ENCODE measurements at regions of chr6 and their contacts with region 1.

Region 1: DNA sequence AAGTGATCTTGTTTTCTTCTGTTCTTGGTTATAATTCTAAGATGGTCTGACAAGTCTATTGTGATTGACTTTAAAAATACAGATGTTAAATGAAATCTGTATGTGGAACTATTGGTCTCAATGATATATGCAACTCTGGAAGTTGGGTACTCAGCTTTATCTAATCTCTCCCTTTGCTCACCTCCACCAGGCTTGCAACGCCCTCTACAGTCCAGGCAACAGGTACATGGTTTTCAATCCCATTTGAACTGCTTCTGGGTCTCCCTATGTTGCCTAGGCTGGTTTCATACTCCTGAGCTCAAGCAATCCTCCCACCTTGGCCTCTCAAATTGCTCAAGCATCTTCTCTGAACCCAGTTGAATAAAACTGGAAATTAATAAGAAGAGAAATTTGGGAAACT is 25.6 kb upstream of the HLA-DQB1 start:
- DNase-seq: peak; percentile 81
- H3K4me3 Mint-ChIP-seq: no peak overlapping the region
- H3K27ac Mint-ChIP-seq: no peak overlapping the region
- H3K4me1 Mint-ChIP-seq: no peaks in the 10 kb centered on the region
- H3K27me3 Mint-ChIP-seq: peaks cover 75% of the 10 kb centered on the region
- CTCF ChIP-seq: peak; percentile 83

Region 2: GRCh38 chr6:32432050-32432450 is 260.0 kb before region 1 on chr6:
- CTCF ChIA-PET with region 1: interaction called, 3 read pairs
- intact Hi-C with region 1: loop called (anchors 2 kb)
- DNase-seq: no peak
- H3K4me3 Mint-ChIP-seq: no peak overlapping the region
- H3K27ac Mint-ChIP-seq: no peak overlapping the region
- H3K4me1 Mint-ChIP-seq: no peaks in the 10 kb centered on the region
- H3K27me3 Mint-ChIP-seq: peaks cover 74% of the 10 kb centered on the region
- CTCF ChIP-seq: peak; percentile 69

Region 3: DNA sequence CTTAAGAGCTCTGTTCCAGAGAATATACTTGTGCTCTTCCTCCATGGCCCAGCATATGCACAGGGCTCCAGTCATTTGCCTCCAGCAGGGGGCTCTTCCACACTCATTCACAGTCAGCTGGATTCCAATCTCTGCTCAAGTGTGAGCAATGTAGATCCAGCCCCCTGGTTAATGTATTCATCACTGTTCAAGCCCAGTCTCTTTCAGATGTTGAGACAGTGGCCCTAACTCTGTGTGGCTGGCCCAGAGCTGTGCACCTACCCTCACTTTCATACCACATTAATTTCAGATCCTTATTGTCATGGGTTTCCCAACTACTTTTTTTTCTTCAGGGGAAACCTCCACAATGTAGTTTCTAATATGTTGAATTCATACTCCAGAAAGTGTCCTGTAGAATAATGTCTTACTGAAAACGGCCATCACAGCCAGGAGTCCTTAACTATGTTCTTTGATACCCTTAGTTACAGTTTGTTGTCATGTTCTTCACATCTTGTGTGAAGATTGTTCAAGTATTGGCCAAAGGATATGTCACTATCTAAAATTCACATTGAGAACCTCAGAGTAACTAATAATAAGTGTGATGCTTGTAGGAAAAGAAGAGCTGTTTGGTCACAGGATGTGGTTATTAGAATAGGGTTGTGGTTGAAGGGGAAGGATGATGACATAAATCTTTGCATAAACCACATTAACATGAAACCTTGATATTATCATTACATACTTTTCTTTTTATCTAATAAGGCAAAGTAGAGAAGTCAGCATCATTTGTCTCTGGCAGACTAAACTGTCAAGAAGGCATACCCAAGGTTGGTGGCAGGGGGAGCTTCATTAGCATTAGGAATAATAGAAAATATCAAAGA is 69.2 kb before region 1 on chr6:
- CTCF ChIA-PET with region 1: interaction called, 21 read pairs
- intact Hi-C with region 1: loop called (anchors 1 kb)
- DNase-seq: peak; percentile 59
- H3K4me3 Mint-ChIP-seq: no peak overlapping the region
- H3K27ac Mint-ChIP-seq: no peak overlapping the region
- H3K4me1 Mint-ChIP-seq: peaks cover 13% of the 10 kb centered on the region
- H3K27me3 Mint-ChIP-seq: no peaks in the 10 kb centered on the region
- CTCF ChIP-seq: no peak

Region 4: DNA sequence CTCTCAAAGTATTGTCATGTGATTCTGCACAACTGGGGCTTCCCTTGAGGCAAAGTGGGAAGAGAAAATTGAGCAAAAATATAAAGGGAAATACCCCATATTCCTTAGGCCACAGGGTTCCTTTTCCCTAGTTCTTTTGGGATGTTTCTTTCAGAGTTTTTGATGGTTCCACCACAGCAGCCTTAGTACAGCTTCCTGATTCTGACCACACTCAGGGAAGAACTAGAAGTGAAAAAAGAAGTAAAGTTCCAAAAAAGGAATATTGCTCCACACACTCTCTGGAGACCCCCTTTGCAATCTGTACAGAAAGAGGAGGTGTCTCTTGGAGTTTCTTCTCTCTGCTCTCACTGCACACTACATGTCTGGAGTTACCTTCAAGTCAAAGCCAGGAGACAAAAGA is 21.2 kb after region 1 on chr6:
- CTCF ChIA-PET with region 1: no interaction called
- intact Hi-C with region 1: no loop called
- DNase-seq: no peak
- H3K4me3 Mint-ChIP-seq: no peak overlapping the region
- H3K27ac Mint-ChIP-seq: no peak overlapping the region
- H3K4me1 Mint-ChIP-seq: no peaks in the 10 kb centered on the region
- H3K27me3 Mint-ChIP-seq: peaks cover 41% of the 10 kb centered on the region
- CTCF ChIP-seq: no peak

Region 5: GRCh38 chr6:32816746-32817204 is 124.8 kb after region 1 on chr6 and contains the start of gene HLA-DOB:
- CTCF ChIA-PET with region 1: no interaction called
- intact Hi-C with region 1: no loop called
- DNase-seq: peak; percentile 65
- H3K4me3 Mint-ChIP-seq: peak within 1 kb of the TSS; percentile 10
- H3K27ac Mint-ChIP-seq: peak within 1 kb of the TSS; percentile 6
- H3K4me1 Mint-ChIP-seq: peaks cover 12% of the 10 kb centered on the region
- H3K27me3 Mint-ChIP-seq: peaks cover 35% of the 10 kb centered on the region
- CTCF ChIP-seq: no peak
- total RNA-seq, gene HLA-DOB: 0.97 and 2.2 TPM in 2 replicates